ENCODE measurements at regions of chr1 and their contacts with region 1.

Region 1: GRCh38 chr1:224113918-224114786 is at the start of gene FBXO28:
- DNase-seq: peak; percentile 91 to 99 (median 98)

Region 2: GRCh38 chr1:223802602-223803001 is 311.6 kb before region 1 on chr1:
- intact Hi-C with region 1: no loop called
- DNase-seq: peak in 22 of 42 donors; percentile 18 to 73 (median 47)

Region 3: DNA sequence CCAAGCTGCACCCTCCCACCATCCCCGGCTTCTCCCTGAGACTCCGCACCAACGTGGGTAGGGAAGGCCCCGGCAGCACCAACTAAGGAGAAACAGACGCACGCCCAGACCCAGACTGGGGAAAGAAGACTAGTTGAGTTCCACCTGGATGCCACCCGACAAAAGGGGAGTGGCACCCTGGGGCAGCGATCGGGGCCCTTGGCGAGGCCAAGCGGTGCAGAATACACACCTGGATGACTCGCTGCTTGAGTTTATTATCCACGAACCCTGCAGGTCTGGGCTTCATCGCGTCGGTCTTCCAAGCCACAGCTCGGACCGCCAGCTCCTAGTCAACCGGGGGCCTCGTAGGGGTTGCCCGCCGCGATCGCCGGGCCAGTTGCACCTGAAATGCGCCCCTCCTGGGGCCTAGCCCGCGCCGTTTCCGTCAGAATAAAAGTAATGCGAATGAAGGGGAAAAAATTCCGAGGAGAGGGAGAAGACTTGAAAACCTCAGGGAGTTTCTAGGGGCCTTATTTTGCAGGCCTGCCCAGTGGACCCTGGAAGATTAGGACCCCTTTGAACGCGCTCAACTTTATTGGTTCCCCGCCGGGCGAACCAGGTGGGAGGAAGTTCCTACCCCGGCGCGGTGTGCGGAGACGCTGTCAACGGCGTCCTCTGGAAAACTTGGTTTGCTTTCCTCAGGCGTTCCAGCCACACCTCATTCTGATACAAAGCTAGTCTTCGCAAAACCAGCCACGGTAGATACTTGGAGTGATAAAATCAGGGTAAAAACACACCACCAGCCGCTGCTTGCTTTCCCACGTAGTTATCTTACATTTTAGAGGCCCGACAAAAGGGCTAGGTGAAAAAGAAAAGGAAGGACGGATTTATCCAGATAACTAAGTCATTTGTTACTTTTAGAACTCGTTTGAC is 215.9 kb after region 1 on chr1 and contains the start of gene NVL:
- intact Hi-C with region 1: loop called (anchors 5 kb)
- DNase-seq: peak; percentile 71 to 95 (median 88)